Mammary epithelial cell (primary cell): ENCODE measurements at regions of chr16 and their contacts with region 1.

Region 1: DNA sequence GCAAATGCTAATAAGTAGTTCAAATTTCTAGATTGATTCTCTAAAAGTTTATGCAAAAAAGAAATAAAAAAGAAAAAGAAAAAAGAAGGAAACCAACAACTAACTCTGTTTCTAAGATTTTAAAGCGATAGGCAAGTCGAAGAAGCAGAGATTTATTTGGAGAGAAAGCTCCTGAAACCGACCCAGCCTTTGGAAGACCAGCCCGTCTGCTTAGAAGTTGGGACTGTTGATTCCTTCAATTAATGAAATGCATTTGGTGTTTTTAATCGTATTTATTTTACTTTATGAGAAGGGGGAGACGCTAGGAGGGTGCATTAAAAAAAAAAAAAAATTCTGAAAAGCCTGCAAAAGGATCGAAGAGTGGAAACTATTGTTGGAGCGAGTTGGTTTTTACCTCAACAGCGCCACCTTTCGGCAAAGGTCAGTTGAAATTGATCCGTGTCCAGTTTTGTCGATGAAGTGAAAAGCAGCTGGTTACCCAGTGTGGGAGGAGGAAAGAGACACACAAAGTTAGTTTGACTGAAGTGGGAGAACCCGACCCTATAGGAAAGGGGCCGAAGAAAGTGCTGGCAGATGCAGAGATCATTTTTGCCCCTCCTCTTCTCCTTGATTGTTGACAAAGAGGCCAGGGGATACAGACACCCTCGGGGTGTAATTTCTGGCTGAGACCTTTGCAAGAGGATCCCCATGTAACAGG is 1.5 kb upstream of the MAF start:
- DNase-seq: peak; percentile 72
- H3K4me3 ChIP-seq: peak overlapping the region; percentile 87 to 94 (median 90)
- H3K27ac ChIP-seq: peak overlapping the region; percentile 56
- H3K4me1 ChIP-seq: peaks cover 29% of the 10 kb centered on the region
- H3K27me3 ChIP-seq: no peaks in the 10 kb centered on the region
- CTCF ChIP-seq: peak; percentile 73 to 75

Region 2: DNA sequence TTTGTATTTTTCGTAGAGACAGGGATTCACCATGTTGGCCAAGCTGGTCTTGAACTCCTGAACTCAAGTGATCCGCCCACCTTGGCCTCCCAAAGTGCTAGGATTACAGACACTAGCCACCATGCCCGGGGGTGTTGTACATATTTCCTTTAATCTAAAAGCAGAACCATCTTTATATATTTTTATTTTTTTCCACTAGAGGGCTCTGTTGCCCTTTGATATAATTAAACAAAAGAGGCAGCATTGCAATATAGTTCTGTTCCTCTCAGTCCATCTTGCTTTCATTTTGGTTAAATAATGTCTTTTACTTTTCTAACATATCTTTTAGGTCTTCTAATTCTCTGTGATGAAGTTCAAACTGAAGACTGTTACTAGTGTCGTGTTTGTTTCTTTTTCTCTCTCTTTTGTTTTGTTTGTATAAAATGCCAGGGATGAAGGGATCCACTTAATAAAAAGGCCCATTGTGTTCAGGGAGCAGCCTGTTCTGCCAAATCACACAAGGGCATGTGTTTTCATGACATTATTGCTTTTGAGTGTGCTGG is 1479.2 kb before region 1 on chr16:
- CTCF ChIA-PET with region 1: no interaction called
- dilution Hi-C with region 1: no loop called
- in situ Hi-C with region 1: loop called in 1 of 2 experiments (anchors 25 kb)
- intact Hi-C with region 1: loop called (anchors 1 kb)
- DNase-seq: peak; percentile 57
- H3K4me3 ChIP-seq: peak overlapping the region in 2 of 3 experiments; percentile 32 to 46
- H3K27ac ChIP-seq: peak overlapping the region; percentile 62
- H3K4me1 ChIP-seq: peaks cover 3% of the 10 kb centered on the region
- H3K27me3 ChIP-seq: no peaks in the 10 kb centered on the region
- CTCF ChIP-seq: peak; percentile 18 to 33

Region 3: GRCh38 chr16:78984887-78985464 is 617.1 kb before region 1 on chr16:
- CTCF ChIA-PET with region 1: no interaction called
- dilution Hi-C with region 1: no loop called
- in situ Hi-C with region 1: no loop called
- intact Hi-C with region 1: loop called (anchors 10 kb)
- DNase-seq: no peak
- H3K4me3 ChIP-seq: no peak overlapping the region
- H3K27ac ChIP-seq: no peak overlapping the region
- H3K4me1 ChIP-seq: peaks cover 31% of the 10 kb centered on the region
- H3K27me3 ChIP-seq: no peaks in the 10 kb centered on the region
- CTCF ChIP-seq: no peak

Region 4: GRCh38 chr16:79751471-79752184 is 149.5 kb after region 1 on chr16:
- CTCF ChIA-PET with region 1: no interaction called
- dilution Hi-C with region 1: no loop called
- in situ Hi-C with region 1: loop called in 1 of 2 experiments (anchors 25 kb)
- intact Hi-C with region 1: loop called (anchors 5 kb)
- DNase-seq: peak; percentile 86
- H3K4me3 ChIP-seq: no peak overlapping the region
- H3K27ac ChIP-seq: peak overlapping the region; percentile 48
- H3K4me1 ChIP-seq: peaks cover 32% of the 10 kb centered on the region
- H3K27me3 ChIP-seq: no peaks in the 10 kb centered on the region
- CTCF ChIP-seq: no peak

Region 5: GRCh38 chr16:80027007-80027965 is 425.2 kb after region 1 on chr16:
- CTCF ChIA-PET with region 1: no interaction called
- dilution Hi-C with region 1: no loop called
- in situ Hi-C with region 1: no loop called
- intact Hi-C with region 1: loop called (anchors 5 kb)
- DNase-seq: peak; percentile 99
- H3K4me3 ChIP-seq: peak overlapping the region in 2 of 3 experiments; percentile 6 to 16
- H3K27ac ChIP-seq: peak overlapping the region; percentile 96
- H3K4me1 ChIP-seq: peaks cover 46% of the 10 kb centered on the region
- H3K27me3 ChIP-seq: no peaks in the 10 kb centered on the region
- CTCF ChIP-seq: no peak

Region 6: GRCh38 chr16:80369138-80369958 is 767.3 kb after region 1 on chr16:
- CTCF ChIA-PET with region 1: no interaction called
- dilution Hi-C with region 1: no loop called
- in situ Hi-C with region 1: no loop called
- intact Hi-C with region 1: loop called (anchors 5 kb)
- DNase-seq: peak; percentile 39
- H3K4me3 ChIP-seq: no peak overlapping the region
- H3K27ac ChIP-seq: no peak overlapping the region
- H3K4me1 ChIP-seq: peaks cover 4% of the 10 kb centered on the region
- H3K27me3 ChIP-seq: no peaks in the 10 kb centered on the region
- CTCF ChIP-seq: peak; percentile 70 to 85